Panc1 (cell line): ENCODE measurements at regions of chr5 and their contacts with region 1.

Region 1: DNA sequence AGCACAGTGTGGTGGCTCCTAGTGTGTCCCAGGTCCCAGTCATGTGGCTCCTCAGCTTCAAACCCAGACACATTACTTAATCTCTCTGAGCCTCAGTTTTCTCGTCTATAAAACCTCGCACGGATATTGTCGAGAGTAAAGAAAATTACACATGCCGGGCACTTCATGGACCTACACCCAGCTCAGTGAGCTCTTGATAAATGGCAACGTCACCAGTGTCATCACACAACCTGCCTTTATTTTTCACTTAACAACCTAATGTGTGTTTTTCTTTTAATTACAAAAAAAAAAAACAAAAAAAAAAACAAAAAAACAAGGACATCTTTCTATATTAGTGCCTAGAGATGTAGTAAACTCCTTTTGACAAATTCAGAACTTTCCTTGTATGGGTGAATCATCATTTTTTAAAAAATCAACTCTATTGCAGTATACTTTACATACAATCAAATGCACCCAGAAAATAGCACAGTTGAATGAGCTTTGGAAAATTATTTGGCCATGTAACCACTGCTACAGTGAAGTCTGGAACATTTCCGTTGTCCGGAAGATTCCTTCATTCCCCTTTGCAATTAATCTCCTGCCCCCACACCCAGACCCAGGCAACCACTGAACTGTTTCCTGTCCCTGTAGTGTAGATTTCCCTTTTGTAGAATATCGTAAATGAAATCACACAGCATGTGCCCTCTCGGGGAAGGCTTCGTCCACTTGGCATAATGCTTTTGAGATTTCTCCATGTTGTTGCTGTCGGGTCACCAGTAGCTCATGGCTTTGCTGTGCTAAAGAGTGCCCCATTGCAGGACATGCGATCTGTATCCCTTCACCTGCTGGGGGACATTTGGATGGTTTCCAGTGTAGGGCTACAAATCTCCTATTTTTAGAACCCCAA is 100.4 kb upstream of the LARP1 start:
- DNase-seq: no peak
- ATAC-seq: 0 out of 2 replicates have a peak, but pooled peaks have one; percentile 29
- H3K4me3 ChIP-seq: peak overlapping the region; percentile 6 to 7; a peak in 2 of 4 replicates
- H3K27ac ChIP-seq: peak overlapping the region; percentile 69
- H3K4me1 ChIP-seq: peaks cover 15% of the 10 kb centered on the region
- H3K27me3 ChIP-seq: no peaks in the 10 kb centered on the region
- CTCF ChIP-seq: no peak

Region 2: GRCh38 chr5:154811653-154812365 is 157.1 kb after region 1 on chr5:
- CTCF ChIA-PET with region 1: interaction called, 5 read pairs
- POLR2A ChIA-PET with region 1: no interaction called
- in situ Hi-C with region 1: no loop called
- intact Hi-C with region 1: loop called (anchors 5 kb)
- DNase-seq: no peak
- ATAC-seq: peak; percentile 75
- H3K4me3 ChIP-seq: no peak overlapping the region
- H3K27ac ChIP-seq: no peak overlapping the region
- H3K4me1 ChIP-seq: no peaks in the 10 kb centered on the region
- H3K27me3 ChIP-seq: no peaks in the 10 kb centered on the region
- CTCF ChIP-seq: peak; percentile 92